ENCODE measurements at regions of chr2 and their contacts with region 1.

Region 1: GRCh38 chr2:28751252-28751955 is at the start of gene PPP1CB:
- DNase-seq: peak; percentile 92
- H3K4me3 Mint-ChIP-seq: peak within 1 kb of the TSS; percentile 95
- H3K27ac Mint-ChIP-seq: peak within 1 kb of the TSS; percentile 98
- H3K4me1 Mint-ChIP-seq: peaks cover 20% of the 10 kb centered on the region
- H3K27me3 Mint-ChIP-seq: no peaks in the 10 kb centered on the region
- CTCF ChIP-seq: peak; percentile 21
- total RNA-seq, gene PPP1CB: 244 and 269 TPM in 2 replicates

Region 2: GRCh38 chr2:26993768-26994167 is 1757.6 kb before region 1 on chr2:
- CTCF ChIA-PET with region 1: no interaction called
- POLR2A ChIA-PET with region 1: no interaction called
- intact Hi-C with region 1: no loop called
- DNase-seq: peak; percentile 18
- H3K4me3 Mint-ChIP-seq: no peak overlapping the region
- H3K27ac Mint-ChIP-seq: no peak overlapping the region
- H3K4me1 Mint-ChIP-seq: peaks cover 3% of the 10 kb centered on the region
- H3K27me3 Mint-ChIP-seq: no peaks in the 10 kb centered on the region
- CTCF ChIP-seq: no peak

Region 3: DNA sequence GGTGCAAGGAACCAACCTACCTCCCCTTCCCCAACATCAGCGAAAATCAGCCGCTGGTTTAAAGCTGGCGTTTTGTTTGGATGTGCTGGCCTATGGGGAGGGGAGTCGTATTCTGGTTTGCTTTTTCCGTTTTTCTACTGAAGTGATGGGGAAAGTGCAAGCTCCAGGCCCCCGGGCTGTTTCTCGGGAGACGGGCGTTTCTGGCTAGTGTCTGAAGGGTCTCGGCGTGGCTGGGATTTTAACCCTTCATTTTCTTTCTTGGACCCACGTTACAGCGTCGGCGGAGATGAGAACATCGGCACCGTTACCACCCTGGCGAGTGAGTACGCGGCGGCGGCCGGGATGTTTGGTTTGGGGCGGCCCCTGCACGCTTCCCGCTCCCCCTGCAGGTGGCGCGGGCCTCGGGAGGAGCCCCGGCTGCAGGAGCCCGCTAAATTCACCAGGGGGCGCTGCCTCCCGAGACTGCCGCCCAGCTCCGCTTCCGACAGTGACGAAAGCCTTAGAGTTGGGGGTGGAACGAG is 184.8 kb before region 1 on chr2:
- CTCF ChIA-PET with region 1: interaction called, 21 read pairs
- POLR2A ChIA-PET with region 1: interaction called, 35 read pairs
- intact Hi-C with region 1: loop called (anchors 1 kb)
- DNase-seq: peak; percentile 83
- H3K4me3 Mint-ChIP-seq: peak overlapping the region; percentile 78
- H3K27ac Mint-ChIP-seq: no peak overlapping the region
- H3K4me1 Mint-ChIP-seq: peaks cover 18% of the 10 kb centered on the region
- H3K27me3 Mint-ChIP-seq: no peaks in the 10 kb centered on the region
- CTCF ChIP-seq: peak; percentile 99

Region 4: DNA sequence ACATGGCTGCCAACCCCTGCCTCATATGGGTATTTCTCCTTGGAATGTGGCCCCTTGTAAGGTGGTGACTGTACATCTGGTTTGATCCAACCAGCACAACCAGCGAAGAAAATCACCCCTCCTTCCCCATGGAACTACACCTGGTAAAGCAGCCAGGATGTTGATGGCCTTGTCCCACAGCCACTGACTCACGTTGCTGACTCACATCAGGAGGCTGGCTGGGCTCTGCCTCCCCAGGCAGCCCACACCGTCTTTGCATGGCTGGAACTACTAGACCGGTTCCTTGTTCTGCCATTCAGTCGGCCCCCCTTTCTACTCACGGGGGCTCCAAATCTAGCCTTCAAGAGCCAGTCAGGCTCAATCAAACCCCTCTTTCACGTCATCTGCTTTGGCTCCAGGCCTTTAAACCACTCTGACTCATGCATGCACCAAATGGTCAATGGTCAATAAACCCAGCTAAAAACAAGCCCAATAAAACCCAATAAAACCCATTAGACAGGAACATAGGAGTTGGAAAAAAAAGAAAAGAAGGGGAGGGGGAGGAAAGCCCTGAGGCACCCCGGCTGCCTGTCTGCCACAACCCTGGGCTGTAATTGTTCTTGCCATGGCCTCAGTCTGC is 140.7 kb before region 1 on chr2:
- CTCF ChIA-PET with region 1: interaction called, 7 read pairs
- POLR2A ChIA-PET with region 1: interaction called, 34 read pairs
- intact Hi-C with region 1: loop called (anchors 5 kb)
- DNase-seq: peak; percentile 92
- H3K4me3 Mint-ChIP-seq: peak overlapping the region; percentile 24
- H3K27ac Mint-ChIP-seq: peak overlapping the region; percentile 95
- H3K4me1 Mint-ChIP-seq: peaks cover 34% of the 10 kb centered on the region
- H3K27me3 Mint-ChIP-seq: no peaks in the 10 kb centered on the region
- CTCF ChIP-seq: no peak

Region 5: DNA sequence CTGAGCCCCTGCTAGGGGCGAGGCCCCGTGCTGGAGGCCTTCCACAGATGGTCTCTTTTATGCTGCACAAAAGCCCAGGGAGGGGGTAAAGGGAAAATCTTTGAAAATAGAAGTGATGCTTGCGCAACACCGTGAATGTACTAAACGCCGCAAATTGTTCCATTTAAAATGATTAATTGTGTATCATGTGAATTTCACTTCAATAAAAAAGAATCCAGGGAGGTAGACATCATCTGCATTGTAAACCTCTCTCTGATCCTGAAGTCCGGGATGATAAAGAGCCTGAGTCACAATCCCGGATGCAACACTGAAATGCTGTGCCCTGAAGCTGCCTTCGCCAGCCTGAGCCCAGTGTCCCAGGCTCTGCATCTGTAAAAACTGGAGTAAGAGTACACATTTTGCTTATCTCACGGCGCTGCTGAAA is 107.5 kb before region 1 on chr2:
- CTCF ChIA-PET with region 1: interaction called, 3 read pairs
- POLR2A ChIA-PET with region 1: interaction called, 10 read pairs
- intact Hi-C with region 1: loop called (anchors 5 kb)
- DNase-seq: peak; percentile 76
- H3K4me3 Mint-ChIP-seq: peak overlapping the region; percentile 47
- H3K27ac Mint-ChIP-seq: peak overlapping the region; percentile 59
- H3K4me1 Mint-ChIP-seq: peaks cover 35% of the 10 kb centered on the region
- H3K27me3 Mint-ChIP-seq: no peaks in the 10 kb centered on the region
- CTCF ChIP-seq: no peak

Region 6: DNA sequence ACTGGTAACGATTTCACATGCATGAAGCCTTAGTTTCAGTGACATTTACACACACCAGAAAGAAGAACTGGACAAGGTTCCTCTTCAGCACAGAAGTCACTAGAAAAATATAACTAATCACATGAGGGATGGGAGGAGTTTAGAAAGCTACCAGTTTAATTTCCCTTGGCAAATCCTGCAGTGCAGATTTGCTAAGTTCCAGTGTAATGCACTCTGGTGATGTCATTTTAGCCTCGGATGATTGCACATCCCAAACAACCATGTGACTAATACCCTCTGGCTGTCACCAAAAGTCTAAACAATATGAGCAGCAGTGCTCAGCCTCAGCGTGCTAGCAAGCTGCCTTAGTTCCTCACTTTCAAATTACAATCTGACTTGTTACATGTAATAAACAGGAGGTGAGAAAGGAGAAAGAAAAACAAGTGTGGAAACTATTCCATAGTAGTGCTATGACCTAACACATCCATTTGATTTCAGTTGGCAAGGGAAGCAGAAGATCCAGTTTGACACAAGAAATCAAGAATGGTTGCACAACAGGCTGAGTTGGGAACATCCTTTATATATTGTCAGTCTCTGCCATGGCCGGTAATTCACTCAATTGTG is 35.0 kb before region 1 on chr2:
- CTCF ChIA-PET with region 1: interaction called, 4 read pairs
- POLR2A ChIA-PET with region 1: interaction called, 41 read pairs
- intact Hi-C with region 1: loop called (anchors 1 kb)
- DNase-seq: peak; percentile 90
- H3K4me3 Mint-ChIP-seq: peak overlapping the region; percentile 42
- H3K27ac Mint-ChIP-seq: peak overlapping the region; percentile 97
- H3K4me1 Mint-ChIP-seq: peaks cover 30% of the 10 kb centered on the region
- H3K27me3 Mint-ChIP-seq: no peaks in the 10 kb centered on the region
- CTCF ChIP-seq: no peak

Region 7: DNA sequence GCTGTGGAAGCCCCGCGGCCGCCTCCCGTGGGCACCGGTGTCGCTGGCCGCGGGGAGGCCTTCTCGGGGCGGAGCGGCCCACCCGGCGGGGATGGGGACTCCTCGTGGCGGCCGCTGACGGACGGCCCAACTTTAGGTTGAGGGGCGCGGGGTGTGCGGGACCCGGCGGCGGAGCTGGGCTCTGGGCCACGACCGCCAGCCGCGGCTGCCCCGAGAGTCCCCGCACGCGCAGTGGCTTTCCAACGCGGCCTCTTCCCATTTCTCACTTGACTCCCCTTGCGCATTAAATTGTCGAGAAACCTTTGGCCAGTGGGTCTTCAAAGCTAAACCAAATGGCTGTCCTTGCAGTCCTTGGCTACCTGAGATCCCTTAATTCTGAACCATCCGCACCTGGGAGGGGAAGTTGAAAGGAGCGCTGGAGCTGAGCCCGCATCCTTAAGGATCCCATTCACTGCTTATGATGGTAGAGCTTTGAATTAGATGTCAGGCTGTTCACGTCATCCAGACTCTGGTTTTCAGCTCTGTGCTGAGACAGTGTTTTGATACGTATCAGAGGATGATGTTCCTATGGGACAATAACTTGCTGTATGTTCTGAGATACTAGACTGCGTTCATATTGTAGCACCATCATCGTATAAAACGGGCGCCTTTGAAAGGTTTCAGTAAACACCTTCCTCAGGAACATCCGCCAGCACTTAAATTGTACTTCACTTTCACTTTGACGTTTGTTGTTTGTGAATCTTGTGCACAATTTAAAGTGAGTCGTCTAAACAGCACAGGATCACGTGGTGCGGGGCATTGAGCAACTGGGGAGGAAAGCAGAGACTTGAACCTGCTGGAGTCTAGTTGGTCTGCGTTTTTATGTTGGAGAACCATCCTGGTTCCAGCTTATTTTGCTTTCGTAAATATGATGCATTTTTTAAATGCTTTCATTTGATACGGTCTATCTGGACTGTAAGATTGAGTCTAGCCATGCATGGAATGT is 364.7 kb after region 1 on chr2:
- CTCF ChIA-PET with region 1: no interaction called
- POLR2A ChIA-PET with region 1: no interaction called
- intact Hi-C with region 1: no loop called
- DNase-seq: peak; percentile 87
- H3K4me3 Mint-ChIP-seq: peak overlapping the region; percentile 90
- H3K27ac Mint-ChIP-seq: peak overlapping the region; percentile 49
- H3K4me1 Mint-ChIP-seq: peaks cover 40% of the 10 kb centered on the region
- H3K27me3 Mint-ChIP-seq: no peaks in the 10 kb centered on the region
- CTCF ChIP-seq: no peak

Region 8: GRCh38 chr2:29627279-29627711 is 875.9 kb after region 1 on chr2:
- CTCF ChIA-PET with region 1: no interaction called
- POLR2A ChIA-PET with region 1: no interaction called
- intact Hi-C with region 1: no loop called
- DNase-seq: peak; percentile 55
- H3K4me3 Mint-ChIP-seq: no peak overlapping the region
- H3K27ac Mint-ChIP-seq: no peak overlapping the region
- H3K4me1 Mint-ChIP-seq: peaks cover 17% of the 10 kb centered on the region
- H3K27me3 Mint-ChIP-seq: peaks cover 28% of the 10 kb centered on the region
- CTCF ChIP-seq: no peak

Measured in MCF 10A (cell line).